Vagina (tissue), 2 donors: ENCODE measurements at regions of chr7 and their contacts with region 1.

Region 1: DNA sequence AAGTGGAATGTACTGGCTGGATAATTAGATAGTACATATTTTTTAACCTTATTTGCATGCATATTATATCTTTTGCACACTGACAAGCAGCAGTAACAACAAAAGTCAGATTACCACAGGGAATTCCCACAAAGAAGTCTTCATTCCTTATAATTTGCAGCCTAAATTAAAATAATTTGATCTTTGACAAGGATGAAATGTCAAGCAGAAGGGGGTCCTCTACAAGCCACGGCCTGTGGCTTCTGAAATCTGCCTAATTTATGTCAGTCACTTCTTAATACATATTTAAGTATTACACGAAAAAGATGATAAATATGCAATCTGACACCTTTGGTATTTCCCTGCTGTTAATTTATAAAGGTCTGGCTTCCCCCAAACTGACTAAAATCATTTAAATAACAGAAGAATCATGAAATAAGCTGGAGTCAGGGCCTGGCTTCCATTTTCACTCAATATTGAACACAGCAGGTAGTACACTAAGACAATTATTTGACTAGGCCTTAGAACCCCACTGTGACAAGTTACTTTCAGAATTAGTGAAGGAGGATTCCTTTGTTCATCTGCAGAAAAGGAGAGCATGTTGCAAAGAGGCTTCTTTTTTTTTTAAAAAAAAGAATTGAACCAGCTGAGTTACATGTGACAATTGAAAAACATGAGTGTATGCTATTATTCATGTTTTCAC is 351.1 kb upstream of the ETV1 start:
- DNase-seq: no peak
- H3K4me3 ChIP-seq: no peak overlapping the region
- H3K27ac ChIP-seq: no peak overlapping the region
- H3K4me1 ChIP-seq: no peaks in the 10 kb centered on the region
- H3K27me3 ChIP-seq: no peaks in the 10 kb centered on the region
- CTCF ChIP-seq: no peak
- POLR2A ChIP-seq: no peak

Region 2: GRCh38 chr7:15326044-15326644 is 985.6 kb after region 1 on chr7:
- intact Hi-C with region 1: loop called (anchors 10 kb)
- DNase-seq: no peak
- H3K4me3 ChIP-seq: no peak overlapping the region
- H3K27ac ChIP-seq: no peak overlapping the region
- H3K4me1 ChIP-seq: no peaks in the 10 kb centered on the region
- H3K27me3 ChIP-seq: no peaks in the 10 kb centered on the region
- CTCF ChIP-seq: peak in 1 of 3 experiments; percentile 39
- POLR2A ChIP-seq: no peak